ENCODE measurements at regions of chrX and their contacts with region 1.

Region 1: DNA sequence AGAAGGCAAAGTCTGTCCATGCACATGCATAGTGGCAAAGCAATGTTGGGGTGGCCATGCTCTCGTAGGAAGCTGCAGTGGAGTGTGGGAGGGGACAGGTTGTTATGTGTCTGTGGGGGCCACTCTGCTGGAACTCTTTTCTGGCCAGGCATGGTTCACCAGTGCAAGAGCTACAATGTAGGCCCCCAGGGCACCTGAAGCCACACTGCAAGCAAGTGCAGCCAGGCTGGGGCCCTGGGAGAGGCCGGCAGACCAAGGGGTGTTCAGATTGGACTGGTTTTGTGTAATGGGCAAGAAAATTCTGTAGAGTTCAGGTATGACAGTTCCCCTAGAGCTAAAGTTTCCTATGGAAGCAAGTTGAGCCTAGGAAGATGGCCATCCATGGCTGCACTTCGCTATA is 97.0 kb upstream of the ZC4H2 start:
- DNase-seq: no peak
- H3K4me3 ChIP-seq: no peak overlapping the region
- H3K27ac ChIP-seq: no peak overlapping the region
- H3K4me1 ChIP-seq: no peaks in the 10 kb centered on the region
- H3K27me3 ChIP-seq: no peaks in the 10 kb centered on the region
- CTCF ChIP-seq: no peak

Region 2: GRCh38 chrX:66110112-66110511 is 1036.9 kb after region 1 on chrX:
- intact Hi-C with region 1: loop called (anchors 10 kb)
- DNase-seq: no peak
- H3K4me3 ChIP-seq: no peak overlapping the region
- H3K27ac ChIP-seq: no peak overlapping the region
- H3K4me1 ChIP-seq: no peaks in the 10 kb centered on the region
- H3K27me3 ChIP-seq: no peaks in the 10 kb centered on the region
- CTCF ChIP-seq: peak; percentile 11 to 20

Measured in tibial artery (tissue), 4 donors.